Activated naive CD4-positive, alpha-beta T cell treated with anti-CD3 and anti-CD28 coated beads for 36 hours (primary cell): ENCODE measurements at regions of chr10 and their contacts with region 1.

Region 1: GRCh38 chr10:16817125-16818019 is at the start of gene RSU1:
- DNase-seq: peak; percentile 100
- H3K4me3 Mint-ChIP-seq: peak within 1 kb of the TSS; percentile 89
- H3K27ac Mint-ChIP-seq: peak within 1 kb of the TSS; percentile 90
- H3K4me1 Mint-ChIP-seq: peaks cover 23% of the 10 kb centered on the region
- H3K27me3 Mint-ChIP-seq: no peaks in the 10 kb centered on the region
- total RNA-seq, gene RSU1: 43.4 to 45.1 TPM

Region 2: GRCh38 chr10:15859906-15860691 is 957.3 kb before region 1 on chr10 and contains the start of gene MINDY3:
- CTCF ChIA-PET with region 1: no interaction called
- intact Hi-C with region 1: loop called (anchors 1 kb)
- DNase-seq: peak; percentile 89
- H3K4me3 Mint-ChIP-seq: peak within 1 kb of the TSS; percentile 99
- H3K27ac Mint-ChIP-seq: peak within 1 kb of the TSS; percentile 90
- H3K4me1 Mint-ChIP-seq: peaks cover 28% of the 10 kb centered on the region
- H3K27me3 Mint-ChIP-seq: peaks cover 9% of the 10 kb centered on the region
- total RNA-seq, gene MINDY3: 9.0 to 12.0 TPM

Region 3: GRCh38 chr10:16544129-16544528 is 273.2 kb before region 1 on chr10:
- CTCF ChIA-PET with region 1: no interaction called
- intact Hi-C with region 1: no loop called
- DNase-seq: no peak
- H3K4me3 Mint-ChIP-seq: no peak overlapping the region
- H3K27ac Mint-ChIP-seq: no peak overlapping the region
- H3K4me1 Mint-ChIP-seq: no peaks in the 10 kb centered on the region
- H3K27me3 Mint-ChIP-seq: peaks cover 17% of the 10 kb centered on the region

Region 4: DNA sequence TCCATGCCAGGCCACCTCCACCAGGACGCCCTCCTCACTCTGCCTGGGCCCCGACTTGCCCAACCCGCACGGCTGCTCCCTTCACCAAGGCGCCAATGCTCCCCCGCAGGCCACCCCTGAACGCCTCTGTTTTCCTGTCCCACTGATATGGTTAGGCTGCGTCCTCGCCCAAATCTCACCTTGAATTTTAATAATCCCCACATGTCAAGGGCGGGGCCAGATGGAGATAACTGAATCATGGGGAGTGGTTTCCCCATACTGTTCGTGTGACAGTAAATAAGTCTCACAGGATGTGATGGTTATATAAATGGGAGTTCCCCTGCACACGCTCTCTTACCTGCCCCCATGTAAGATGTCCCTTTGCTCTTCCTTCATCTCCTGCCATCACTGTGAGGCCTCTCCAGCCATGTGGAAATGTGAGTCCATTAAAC is 30.0 kb before region 1 on chr10:
- CTCF ChIA-PET with region 1: interaction called, 3 read pairs
- intact Hi-C with region 1: loop called (anchors 1 kb)
- DNase-seq: peak; percentile 88
- H3K4me3 Mint-ChIP-seq: peak overlapping the region; percentile 65
- H3K27ac Mint-ChIP-seq: peak overlapping the region; percentile 91
- H3K4me1 Mint-ChIP-seq: peaks cover 28% of the 10 kb centered on the region
- H3K27me3 Mint-ChIP-seq: no peaks in the 10 kb centered on the region

Region 5: GRCh38 chr10:16853201-16853600 is 35.8 kb after region 1 on chr10:
- CTCF ChIA-PET with region 1: no interaction called
- intact Hi-C with region 1: no loop called
- DNase-seq: no peak
- H3K4me3 Mint-ChIP-seq: no peak overlapping the region
- H3K27ac Mint-ChIP-seq: no peak overlapping the region
- H3K4me1 Mint-ChIP-seq: no peaks in the 10 kb centered on the region
- H3K27me3 Mint-ChIP-seq: no peaks in the 10 kb centered on the region

Region 6: DNA sequence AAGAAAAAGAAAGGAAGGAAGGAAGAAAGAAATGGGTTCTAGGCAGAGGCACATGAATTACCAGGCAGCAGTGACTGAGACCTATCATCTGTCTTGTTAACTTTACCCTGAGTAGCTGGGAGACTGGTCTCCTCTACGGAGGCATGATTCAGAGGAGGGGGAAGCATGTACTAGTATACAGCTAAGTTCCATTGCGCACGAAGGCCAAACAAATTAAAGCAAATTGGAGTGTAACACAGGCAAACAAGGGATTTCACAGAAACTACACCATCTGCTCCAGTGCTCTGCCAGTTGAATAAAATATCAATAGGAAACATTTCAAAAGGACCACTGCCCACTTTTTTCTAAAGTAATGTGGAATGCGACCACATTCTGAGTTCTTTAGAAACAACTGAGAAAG is 65.7 kb after region 1 on chr10:
- CTCF ChIA-PET with region 1: no interaction called
- intact Hi-C with region 1: no loop called
- DNase-seq: no peak
- H3K4me3 Mint-ChIP-seq: no peak overlapping the region
- H3K27ac Mint-ChIP-seq: no peak overlapping the region
- H3K4me1 Mint-ChIP-seq: no peaks in the 10 kb centered on the region
- H3K27me3 Mint-ChIP-seq: no peaks in the 10 kb centered on the region

Region 7: DNA sequence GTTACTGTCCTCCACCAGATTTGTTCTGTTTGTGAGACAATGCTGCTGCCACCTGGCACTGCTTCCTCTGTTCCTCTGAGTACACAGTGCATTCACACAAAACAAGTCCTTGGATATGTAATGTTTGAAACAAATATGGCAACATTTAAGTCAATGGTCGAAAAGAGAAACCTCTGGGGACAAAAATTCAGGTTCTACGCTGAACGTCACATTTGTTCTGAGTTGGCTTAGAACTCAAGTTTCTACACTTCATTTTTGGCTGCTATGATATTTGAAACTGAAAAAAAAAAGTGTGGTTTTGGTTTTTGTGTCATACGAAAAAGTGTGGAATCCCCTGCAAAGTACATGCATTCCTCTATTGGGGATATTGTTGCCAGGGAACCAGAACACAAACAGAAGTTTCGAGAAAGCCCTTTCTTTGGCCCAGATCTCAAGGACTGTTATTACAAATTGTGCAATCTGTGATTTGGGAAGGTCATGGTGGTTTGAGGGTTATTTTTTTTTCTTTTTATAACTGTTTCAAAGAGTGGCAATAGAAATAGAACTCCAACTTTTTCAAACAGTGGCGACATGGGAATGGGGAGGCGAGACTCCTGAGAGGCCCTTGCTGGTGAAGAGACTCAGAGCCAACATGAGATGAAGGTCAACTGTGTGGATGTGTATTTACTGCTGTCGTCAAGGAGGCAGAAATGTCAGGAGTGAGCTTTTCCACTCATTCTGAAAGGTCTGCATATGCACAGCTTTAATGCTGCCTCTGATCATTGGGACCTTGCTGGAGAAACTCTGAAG is 184.8 kb after region 1 on chr10:
- CTCF ChIA-PET with region 1: no interaction called
- intact Hi-C with region 1: loop called (anchors 1 kb)
- DNase-seq: peak; percentile 44
- H3K4me3 Mint-ChIP-seq: no peak overlapping the region
- H3K27ac Mint-ChIP-seq: peak overlapping the region; percentile 5
- H3K4me1 Mint-ChIP-seq: peaks cover 57% of the 10 kb centered on the region
- H3K27me3 Mint-ChIP-seq: peaks cover 5% of the 10 kb centered on the region

Region 8: GRCh38 chr10:17075533-17076359 is 258.4 kb after region 1 on chr10:
- CTCF ChIA-PET with region 1: no interaction called
- intact Hi-C with region 1: no loop called
- DNase-seq: no peak
- H3K4me3 Mint-ChIP-seq: no peak overlapping the region
- H3K27ac Mint-ChIP-seq: no peak overlapping the region
- H3K4me1 Mint-ChIP-seq: peaks cover 28% of the 10 kb centered on the region
- H3K27me3 Mint-ChIP-seq: no peaks in the 10 kb centered on the region

Region 9: DNA sequence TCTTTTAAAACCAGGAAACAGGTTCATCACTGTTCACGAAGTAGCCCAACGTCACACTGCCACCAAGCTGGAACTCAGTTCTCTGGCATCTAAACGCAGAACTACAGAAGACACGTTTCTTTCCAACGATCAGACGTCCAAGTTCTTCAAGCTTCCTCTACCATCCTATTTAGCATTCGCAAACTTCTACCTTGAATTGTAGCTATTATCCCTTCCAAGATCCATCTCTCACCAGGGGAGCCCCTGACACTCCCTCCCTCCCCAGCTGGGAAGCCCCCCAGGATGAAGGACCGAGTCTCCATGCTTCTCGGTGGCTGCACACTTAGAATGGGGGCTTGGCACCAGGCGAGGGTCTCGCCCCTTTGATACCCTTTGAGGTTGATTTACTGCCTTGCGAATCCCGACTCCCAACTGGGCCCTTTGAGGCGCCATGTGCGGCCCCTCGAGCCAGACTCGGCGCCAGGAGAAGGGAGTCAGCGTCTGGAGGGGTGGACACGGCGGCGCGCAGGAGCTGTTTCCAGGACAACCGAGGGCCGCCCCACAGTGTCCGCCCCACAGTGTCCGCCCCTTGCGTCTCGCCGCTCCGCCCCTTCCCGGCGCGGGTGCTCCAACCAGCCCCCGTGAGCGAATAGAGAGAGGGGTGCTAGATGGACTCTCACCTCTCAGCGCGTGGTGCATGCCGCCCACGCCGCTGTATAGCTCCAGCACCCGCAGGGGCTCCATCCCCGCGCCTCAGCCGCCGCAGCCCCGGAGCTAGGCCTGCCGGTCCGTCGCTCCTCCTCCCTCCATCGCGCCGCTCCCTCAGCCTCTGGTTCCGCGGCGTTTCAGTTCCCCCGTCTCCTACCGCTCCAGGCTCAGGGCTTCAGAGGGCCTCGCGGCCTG is 383.8 kb after region 1 on chr10 and contains the start of gene TRDMT1:
- CTCF ChIA-PET with region 1: no interaction called
- intact Hi-C with region 1: loop called (anchors 1 kb)
- DNase-seq: peak; percentile 77
- H3K4me3 Mint-ChIP-seq: peak within 1 kb of the TSS; percentile 86
- H3K27ac Mint-ChIP-seq: peak within 1 kb of the TSS; percentile 92
- H3K4me1 Mint-ChIP-seq: peaks cover 35% of the 10 kb centered on the region
- H3K27me3 Mint-ChIP-seq: no peaks in the 10 kb centered on the region
- total RNA-seq, gene TRDMT1: 6.5 to 7.2 TPM

Region 10: DNA sequence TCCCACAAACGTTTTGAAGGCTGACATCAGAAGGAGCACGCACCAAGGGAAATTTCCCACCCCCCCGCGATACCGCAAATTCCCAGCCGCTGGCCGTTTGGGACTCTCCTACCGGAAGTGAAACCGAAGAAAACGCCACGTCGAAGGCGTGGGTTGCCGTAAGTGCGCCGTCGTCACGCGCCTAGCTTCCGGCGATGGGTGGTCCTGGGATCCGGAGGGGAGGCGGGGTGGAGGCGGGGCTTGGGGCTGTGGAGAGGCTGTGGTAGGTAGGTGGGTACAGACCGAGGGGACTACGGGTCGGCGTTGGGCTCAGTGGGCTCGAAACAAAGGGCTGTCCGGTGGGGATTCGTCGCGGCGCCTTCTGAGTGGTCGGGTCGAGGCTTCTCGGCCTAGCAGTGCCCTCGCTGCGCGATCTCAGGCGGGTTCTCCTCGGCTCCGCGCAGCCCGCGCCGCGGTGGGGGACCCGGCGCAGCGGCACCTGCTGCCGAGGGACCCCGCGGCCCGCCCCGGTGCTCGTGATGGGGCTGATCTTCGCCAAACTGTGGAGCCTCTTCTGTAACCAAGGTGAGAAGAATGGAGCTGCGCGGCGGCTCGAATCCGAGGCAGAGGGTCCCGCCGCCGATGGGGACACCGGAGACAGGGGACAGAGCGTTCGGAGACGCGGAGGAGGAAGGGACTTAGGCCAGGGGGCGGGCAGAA is 1841.9 kb after region 1 on chr10 and contains the start of gene ARL5B:
- CTCF ChIA-PET with region 1: no interaction called
- intact Hi-C with region 1: loop called (anchors 10 kb)
- DNase-seq: peak; percentile 97
- H3K4me3 Mint-ChIP-seq: peak within 1 kb of the TSS; percentile 93
- H3K27ac Mint-ChIP-seq: peak within 1 kb of the TSS; percentile 98
- H3K4me1 Mint-ChIP-seq: peaks cover 36% of the 10 kb centered on the region
- H3K27me3 Mint-ChIP-seq: no peaks in the 10 kb centered on the region
- total RNA-seq, gene ARL5B: 13.8 to 14.1 TPM